ENCODE measurements at regions of chr7 and their contacts with region 1.

Region 1: DNA sequence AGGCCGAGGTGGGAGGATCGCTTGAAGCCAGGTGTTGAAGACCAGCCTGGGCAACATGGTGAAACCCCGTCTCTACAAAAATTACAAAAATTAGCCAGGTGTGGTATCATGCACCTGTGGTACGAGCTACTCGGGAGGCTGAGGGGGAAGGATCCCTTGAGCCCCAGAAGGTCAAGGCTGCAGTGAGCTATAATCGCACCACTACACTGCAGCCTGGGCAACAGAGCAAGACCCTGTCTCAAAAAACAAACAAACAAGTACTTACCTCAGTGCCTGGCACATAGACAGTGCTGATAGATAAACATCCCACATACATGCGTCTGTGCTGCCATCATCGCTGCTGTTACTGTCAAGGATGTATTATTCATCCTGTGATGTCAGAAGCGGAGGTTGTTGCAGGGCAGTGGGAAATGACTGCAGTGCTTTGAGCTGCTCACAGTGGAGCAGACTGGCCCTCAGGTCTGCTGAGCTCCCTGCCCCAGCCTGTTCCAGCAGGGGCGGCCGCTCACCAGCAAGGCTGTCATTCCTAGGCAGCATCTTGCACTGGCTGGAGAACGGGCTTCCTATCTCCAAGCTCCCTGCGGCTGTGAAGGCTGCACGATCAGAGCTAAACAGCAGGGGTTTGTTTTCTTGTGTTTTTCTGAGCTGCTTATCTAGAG is 18.6 kb downstream of the FOXK1 start:
- H3K4me3 Mint-ChIP-seq: no peak overlapping the region
- H3K27ac Mint-ChIP-seq: peak overlapping the region; percentile 45
- H3K4me1 Mint-ChIP-seq: peaks cover 52% of the 10 kb centered on the region
- H3K27me3 Mint-ChIP-seq: no peaks in the 10 kb centered on the region

Region 2: DNA sequence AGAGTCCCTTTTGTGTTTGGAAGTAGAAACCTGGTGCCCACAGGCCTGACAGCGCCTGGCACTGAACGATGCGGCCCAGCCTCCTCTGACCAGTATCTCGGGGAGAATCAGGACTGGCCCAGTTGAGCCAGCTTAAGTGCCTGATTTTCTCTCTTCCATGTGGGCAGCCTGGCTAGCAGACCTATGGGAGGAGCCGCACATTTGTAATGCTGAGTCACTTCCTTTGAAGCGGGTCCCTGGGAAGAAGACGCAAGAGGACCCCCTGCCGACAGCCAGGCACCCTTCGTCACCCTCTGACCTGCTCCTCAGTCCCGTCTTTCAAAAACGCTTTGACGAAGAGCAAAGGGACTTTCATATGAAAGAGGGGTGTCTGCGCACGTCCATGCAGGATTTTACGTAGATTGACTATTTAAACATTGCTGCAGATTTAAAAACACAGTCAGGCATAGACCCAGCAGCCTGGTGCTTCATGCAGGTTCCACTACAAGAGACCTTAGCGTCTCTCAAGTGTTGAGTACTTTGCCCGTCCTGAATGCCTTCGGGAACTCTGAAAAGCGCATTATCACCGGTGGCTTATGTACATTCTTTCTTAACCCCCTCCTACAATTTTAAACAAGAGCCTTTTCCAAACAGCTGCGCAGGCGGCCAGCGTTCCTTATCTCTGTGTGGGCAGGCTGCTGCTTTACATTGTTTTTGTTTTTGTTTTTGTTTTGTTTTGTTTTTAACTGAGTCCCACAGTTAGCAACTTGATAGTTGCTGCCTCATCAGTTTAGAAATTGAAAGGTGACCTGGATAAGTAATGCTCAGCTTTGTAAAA is 38.2 kb after region 1 on chr7:
- intact Hi-C with region 1: loop called (anchors 5 kb)
- H3K4me3 Mint-ChIP-seq: peak overlapping the region; percentile 50
- H3K27ac Mint-ChIP-seq: peak overlapping the region; percentile 72
- H3K4me1 Mint-ChIP-seq: peaks cover 60% of the 10 kb centered on the region
- H3K27me3 Mint-ChIP-seq: no peaks in the 10 kb centered on the region